Left lung (tissue), 14 donors: ENCODE measurements at regions of chr5 and their contacts with region 1.

Region 1: GRCh38 chr5:113507601-113508000 is 5.9 kb upstream of the YTHDC2 start:
- DNase-seq: no peak
- ATAC-seq: no peak
- H3K4me3 ChIP-seq: no peak overlapping the region
- H3K27ac ChIP-seq: no peak overlapping the region
- H3K4me1 ChIP-seq: no peaks in the 10 kb centered on the region
- H3K27me3 ChIP-seq: peaks cover 4 to 54% of the 10 kb centered on the region in 2 donors
- CTCF ChIP-seq: no peak

Region 2: GRCh38 chr5:113378959-113379541 is 128.6 kb before region 1 on chr5:
- intact Hi-C with region 1: loop called in 1 of 2 experiments (anchors 10 kb)
- DNase-seq: peak in 2 of 4 donors; percentile 44 to 66
- ATAC-seq: peak; percentile 74
- H3K4me3 ChIP-seq: no peak overlapping the region
- H3K27ac ChIP-seq: no peak overlapping the region
- H3K4me1 ChIP-seq: peaks cover 3 to 14% of the 10 kb centered on the region in 2 donors
- H3K27me3 ChIP-seq: peaks cover 0 to 46% of the 10 kb centered on the region in 2 donors
- CTCF ChIP-seq: peak; percentile 60 to 71